ENCODE measurements at regions of chr15 and their contacts with region 1.

Region 1: DNA sequence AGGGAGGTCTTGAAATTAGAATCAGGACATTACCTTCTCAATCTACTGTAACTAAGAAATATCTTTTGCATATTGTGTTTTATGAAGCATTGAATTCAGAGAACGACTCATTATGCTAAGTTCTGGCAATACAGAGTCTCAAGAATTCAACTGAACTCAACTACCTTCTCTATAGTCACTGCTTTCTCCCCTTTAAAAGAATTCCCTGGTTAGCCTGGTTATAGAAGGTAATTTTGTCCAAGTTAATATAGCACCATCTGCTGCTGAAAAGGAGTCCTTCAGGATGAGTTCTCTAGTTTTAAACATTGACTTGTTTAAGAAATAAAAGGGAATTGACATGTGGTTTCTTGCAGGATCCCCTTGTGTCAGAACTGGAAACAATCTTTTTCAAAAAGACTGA is 60.2 kb downstream of the IL16 start:
- DNase-seq: no peak
- ATAC-seq: peak; percentile 55 to 60
- H3K4me3 ChIP-seq: no peak overlapping the region
- H3K27ac ChIP-seq: no peak overlapping the region
- H3K4me1 ChIP-seq: peaks cover 2% of the 10 kb centered on the region
- H3K27me3 ChIP-seq: no peaks in the 10 kb centered on the region

Region 2: GRCh38 chr15:81155375-81156218 is 101.3 kb before region 1 on chr15:
- intact Hi-C with region 1: loop called in 2 of 4 experiments (anchors 5 to 10 kb)
- DNase-seq: peak in 1 of 3 donors; percentile 30
- ATAC-seq: peak; percentile 28 to 48
- H3K4me3 ChIP-seq: no peak overlapping the region
- H3K27ac ChIP-seq: no peak overlapping the region
- H3K4me1 ChIP-seq: peaks cover 3% of the 10 kb centered on the region
- H3K27me3 ChIP-seq: no peaks in the 10 kb centered on the region